Activated T-helper 1 cell treated with anti-CD3 and anti-CD28 coated beads, Interleukin-12 subunit alpha, Interleukin-12 subunit beta, Interleukin-2, Interleukin-4 antibody, amounts not matched to agents 30 ng/mL and 10 ng/mL and 1 ng/mL, durations not matched to agents 14 hours and 24 hours and 36 hours (primary cell): ENCODE measurements at regions of chr19 and their contacts with region 1.

Region 1: DNA sequence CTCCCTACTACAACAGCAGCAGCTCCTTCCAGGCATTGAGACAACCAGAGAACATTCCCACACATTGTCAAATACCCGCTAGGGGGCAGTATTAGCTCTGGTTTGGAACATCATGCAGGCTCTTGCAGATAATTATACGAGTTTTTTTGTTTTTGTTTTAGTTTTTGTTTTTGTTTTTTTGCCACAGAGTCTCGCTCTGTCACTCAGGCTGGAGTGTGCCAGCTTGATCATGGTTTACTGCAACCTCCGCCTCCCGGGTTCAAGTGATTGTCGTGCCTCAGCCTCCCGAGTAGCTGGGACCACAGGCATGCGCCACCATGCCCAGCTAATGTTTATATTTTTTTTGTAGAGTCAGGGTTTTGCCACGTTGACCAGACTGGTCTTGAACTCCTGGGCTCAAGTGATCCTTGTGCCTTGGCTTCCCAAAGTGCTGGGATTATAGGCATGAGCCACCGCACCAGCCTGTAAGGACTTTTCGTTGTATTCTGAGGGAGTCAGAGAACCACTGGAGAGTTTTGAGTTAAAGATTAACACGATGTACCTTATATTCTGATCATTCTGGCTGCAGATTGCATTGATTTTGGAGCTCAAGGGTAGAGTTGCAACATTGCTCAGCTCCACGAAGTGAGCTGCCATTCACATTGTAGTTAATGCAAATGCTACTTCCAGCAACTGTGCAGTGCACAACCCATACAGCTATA is 41.7 kb upstream of the CEACAM20 start:
- DNase-seq: peak; percentile 34
- H3K4me3 Mint-ChIP-seq: no peak overlapping the region
- H3K27ac Mint-ChIP-seq: no peak overlapping the region
- H3K4me1 Mint-ChIP-seq: no peaks in the 10 kb centered on the region
- H3K27me3 Mint-ChIP-seq: peaks cover 1% of the 10 kb centered on the region

Region 2: DNA sequence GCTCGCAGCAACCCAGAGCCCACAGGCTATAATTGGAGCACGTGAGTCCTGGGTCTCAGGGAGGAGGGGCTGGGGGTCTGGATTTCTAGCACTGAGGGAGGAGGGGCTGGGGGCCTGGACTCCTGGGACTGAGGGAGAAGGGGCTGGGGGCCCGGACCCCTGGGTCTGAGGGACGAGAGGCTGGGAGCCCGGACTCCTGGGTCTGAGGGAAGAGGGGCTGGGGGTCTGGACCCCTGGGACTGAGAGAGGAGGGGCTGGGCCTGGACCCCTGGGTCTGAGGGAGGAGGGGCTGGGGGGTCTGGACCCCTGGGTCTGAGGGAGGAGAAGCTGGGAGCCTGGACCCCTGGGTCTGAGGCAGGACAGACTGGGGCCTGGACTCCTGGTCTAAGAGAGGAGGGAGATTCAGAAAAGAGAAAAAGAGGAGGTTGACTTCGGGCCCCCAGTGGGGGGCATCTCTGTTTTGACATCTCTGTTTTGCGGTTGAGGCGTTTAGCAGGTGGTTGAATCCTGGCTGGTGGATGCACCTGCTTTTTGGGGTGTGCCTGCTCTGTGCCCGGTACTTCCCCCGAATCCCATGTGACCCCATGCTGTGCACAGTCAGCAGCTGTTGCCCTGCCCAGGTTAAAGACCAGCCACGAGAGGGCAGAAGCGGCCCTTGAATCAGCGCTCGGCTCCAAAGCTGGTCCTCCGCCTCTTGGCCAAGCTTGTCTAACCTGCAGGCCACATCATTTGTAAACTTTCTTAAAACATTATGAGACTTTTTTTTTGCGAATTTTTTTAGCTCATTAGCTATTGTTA is 83.0 kb after region 1 on chr19:
- intact Hi-C with region 1: loop called (anchors 1 kb)
- DNase-seq: peak; percentile 66
- H3K4me3 Mint-ChIP-seq: no peak overlapping the region
- H3K27ac Mint-ChIP-seq: no peak overlapping the region
- H3K4me1 Mint-ChIP-seq: peaks cover 13% of the 10 kb centered on the region
- H3K27me3 Mint-ChIP-seq: no peaks in the 10 kb centered on the region

Region 3: GRCh38 chr19:44752816-44753618 is 181.9 kb after region 1 on chr19:
- intact Hi-C with region 1: no loop called
- DNase-seq: peak; percentile 95
- H3K4me3 Mint-ChIP-seq: peak overlapping the region; percentile 88
- H3K27ac Mint-ChIP-seq: peak overlapping the region; percentile 90
- H3K4me1 Mint-ChIP-seq: peaks cover 60% of the 10 kb centered on the region
- H3K27me3 Mint-ChIP-seq: no peaks in the 10 kb centered on the region